Panc1 (cell line): ENCODE measurements at regions of chr5 and their contacts with region 1.

Region 1: DNA sequence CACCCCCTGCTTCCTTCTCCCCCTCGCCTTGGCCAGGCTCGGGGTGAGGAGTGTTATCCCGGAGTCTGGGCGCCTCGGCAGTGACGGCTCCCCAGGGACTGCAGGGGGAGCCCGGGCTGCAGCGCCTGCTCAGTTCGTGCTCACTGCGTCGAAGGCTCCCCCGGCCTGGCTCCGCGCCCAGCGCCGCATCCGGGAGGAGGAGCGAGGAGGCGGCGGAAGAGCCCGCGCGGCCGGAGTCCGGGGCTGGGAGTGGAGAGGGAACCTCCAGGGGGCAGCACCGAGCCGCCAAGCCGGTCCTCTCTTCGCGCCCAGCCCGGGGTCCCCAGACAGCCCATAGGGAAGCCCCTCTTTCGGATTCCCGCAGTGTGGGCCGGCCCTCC is 1.3 kb upstream of the EGR1 start:
- DNase-seq: peak; percentile 69
- ATAC-seq: peak; percentile 78
- H3K4me3 ChIP-seq: peak overlapping the region; percentile 81 to 87
- H3K27ac ChIP-seq: peak overlapping the region; percentile 97
- H3K4me1 ChIP-seq: peaks cover 5% of the 10 kb centered on the region; the same call in 1 of the 2 replicates
- H3K27me3 ChIP-seq: no peaks in the 10 kb centered on the region
- CTCF ChIP-seq: peak; percentile 99

Region 2: GRCh38 chr5:138241688-138242571 is 222.1 kb before region 1 on chr5:
- CTCF ChIA-PET with region 1: interaction called, 11 read pairs
- POLR2A ChIA-PET with region 1: no interaction called
- in situ Hi-C with region 1: no loop called
- intact Hi-C with region 1: no loop called
- DNase-seq: no peak
- ATAC-seq: peak; percentile 86
- H3K4me3 ChIP-seq: peak overlapping the region; percentile 44 to 60
- H3K27ac ChIP-seq: peak overlapping the region; percentile 39
- H3K4me1 ChIP-seq: peaks cover 6% of the 10 kb centered on the region
- H3K27me3 ChIP-seq: peaks cover 10% of the 10 kb centered on the region
- CTCF ChIP-seq: no peak

Region 3: GRCh38 chr5:138533973-138534941 is 70.3 kb after region 1 on chr5:
- CTCF ChIA-PET with region 1: no interaction called
- POLR2A ChIA-PET with region 1: interaction called, 19 read pairs
- in situ Hi-C with region 1: no loop called
- intact Hi-C with region 1: no loop called
- DNase-seq: no peak
- ATAC-seq: no peak
- H3K4me3 ChIP-seq: no peak overlapping the region
- H3K27ac ChIP-seq: no peak overlapping the region
- H3K4me1 ChIP-seq: peaks cover 15% of the 10 kb centered on the region
- H3K27me3 ChIP-seq: no peaks in the 10 kb centered on the region
- CTCF ChIP-seq: no peak

Region 4: DNA sequence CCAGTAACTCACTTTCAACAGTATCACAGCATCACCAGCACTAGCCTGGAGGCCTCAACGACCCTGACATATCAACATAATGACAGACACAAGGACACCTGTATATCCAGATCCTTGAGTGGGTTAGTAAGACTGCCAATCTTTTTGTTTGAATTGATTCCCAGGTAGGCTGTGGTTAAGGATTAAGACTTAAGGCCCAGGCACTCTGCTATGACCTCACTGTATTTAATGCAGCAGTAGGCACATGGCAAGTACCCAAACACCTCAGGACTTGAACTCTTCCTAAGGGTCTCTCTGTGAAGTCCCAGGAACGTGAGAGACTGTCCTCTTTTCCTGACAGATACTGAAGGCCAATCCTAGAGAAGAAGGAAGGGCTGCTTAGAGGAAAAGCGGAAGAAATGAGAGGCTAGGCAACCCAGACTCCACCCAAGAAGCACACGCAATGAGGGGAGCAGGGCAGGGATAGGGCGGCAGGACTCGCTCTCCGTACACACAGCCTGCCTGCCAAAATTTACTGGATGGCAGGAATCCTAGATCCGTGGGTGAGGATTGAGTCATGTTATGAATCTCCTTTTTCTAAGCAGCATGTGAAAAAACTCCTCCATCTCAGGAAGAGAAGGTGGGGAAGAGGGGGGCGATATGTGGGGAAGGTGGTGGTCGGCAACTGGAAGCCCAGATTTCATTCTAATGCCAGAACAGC is 640.7 kb after region 1 on chr5:
- CTCF ChIA-PET with region 1: no interaction called
- POLR2A ChIA-PET with region 1: interaction called, 14 read pairs
- in situ Hi-C with region 1: no loop called
- intact Hi-C with region 1: no loop called
- DNase-seq: no peak
- ATAC-seq: no peak
- H3K4me3 ChIP-seq: no peak overlapping the region
- H3K27ac ChIP-seq: no peak overlapping the region
- H3K4me1 ChIP-seq: no peaks in the 10 kb centered on the region
- H3K27me3 ChIP-seq: no peaks in the 10 kb centered on the region
- CTCF ChIP-seq: no peak